Left ventricle myocardium superior (tissue), 1 donor: ENCODE measurements at regions of chr10 and their contacts with region 1.

Region 1: GRCh38 chr10:7525314-7526016 is 114.6 kb upstream of the SFMBT2 start:
- DNase-seq: no peak
- ATAC-seq: peak; percentile 86

Region 2: DNA sequence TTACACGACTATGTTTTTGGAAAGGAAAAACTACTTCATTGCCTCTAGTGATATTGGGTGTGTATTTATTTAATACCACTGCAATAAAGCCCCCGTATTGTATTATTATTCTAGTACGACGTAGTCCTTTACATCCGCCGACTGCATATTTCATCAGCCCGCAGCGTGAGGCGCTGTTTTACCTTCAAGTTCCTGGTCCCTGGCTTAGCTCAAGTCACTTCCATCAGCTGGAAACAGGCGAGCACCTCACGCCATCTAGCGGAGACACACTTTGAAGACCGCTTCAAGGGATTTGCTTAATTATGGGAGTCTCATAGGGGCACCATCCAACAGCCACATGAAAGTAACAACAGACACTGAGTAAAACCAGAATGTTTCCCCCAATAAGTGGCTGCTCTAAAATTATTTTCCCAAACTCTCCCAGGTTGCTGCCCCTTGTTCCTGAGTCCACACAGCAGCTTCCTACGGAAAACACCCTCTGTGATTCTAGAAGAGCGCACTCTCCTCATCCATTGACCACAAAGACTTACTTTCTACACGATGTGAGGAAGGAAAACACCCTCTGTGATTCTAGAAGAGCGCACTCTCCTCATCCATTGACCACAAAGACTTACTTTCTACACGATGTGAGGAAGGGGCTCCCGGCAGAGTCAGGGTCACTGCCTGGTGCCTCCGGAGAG is 161.9 kb after region 1 on chr10:
- intact Hi-C with region 1: loop called (anchors 1 kb)
- DNase-seq: peak; percentile 79
- ATAC-seq: peak; percentile 94

Region 3: DNA sequence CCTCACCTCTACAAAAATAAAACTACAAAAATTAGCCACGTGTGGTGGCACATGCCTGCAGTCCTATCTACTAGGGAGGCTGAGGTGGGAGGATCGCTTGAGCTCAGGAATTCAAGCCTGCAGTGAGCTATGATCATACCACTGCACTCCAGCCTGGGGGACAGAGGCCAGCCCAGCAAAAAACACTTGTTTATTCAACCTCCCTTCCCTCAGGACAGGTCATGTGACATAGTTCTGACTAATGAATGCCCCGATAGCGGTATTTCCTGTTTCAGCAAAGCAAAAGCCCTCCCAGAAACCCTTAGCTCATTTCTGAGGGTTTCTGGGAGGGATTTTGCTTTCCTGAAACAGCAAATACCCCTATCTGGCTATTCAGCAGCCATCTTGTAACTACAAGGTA is 686.1 kb after region 1 on chr10:
- intact Hi-C with region 1: no loop called
- DNase-seq: no peak
- ATAC-seq: no peak